CD8-positive, alpha-beta T cell (primary cell): ENCODE measurements at regions of chr21 and their contacts with region 1.

Region 1: DNA sequence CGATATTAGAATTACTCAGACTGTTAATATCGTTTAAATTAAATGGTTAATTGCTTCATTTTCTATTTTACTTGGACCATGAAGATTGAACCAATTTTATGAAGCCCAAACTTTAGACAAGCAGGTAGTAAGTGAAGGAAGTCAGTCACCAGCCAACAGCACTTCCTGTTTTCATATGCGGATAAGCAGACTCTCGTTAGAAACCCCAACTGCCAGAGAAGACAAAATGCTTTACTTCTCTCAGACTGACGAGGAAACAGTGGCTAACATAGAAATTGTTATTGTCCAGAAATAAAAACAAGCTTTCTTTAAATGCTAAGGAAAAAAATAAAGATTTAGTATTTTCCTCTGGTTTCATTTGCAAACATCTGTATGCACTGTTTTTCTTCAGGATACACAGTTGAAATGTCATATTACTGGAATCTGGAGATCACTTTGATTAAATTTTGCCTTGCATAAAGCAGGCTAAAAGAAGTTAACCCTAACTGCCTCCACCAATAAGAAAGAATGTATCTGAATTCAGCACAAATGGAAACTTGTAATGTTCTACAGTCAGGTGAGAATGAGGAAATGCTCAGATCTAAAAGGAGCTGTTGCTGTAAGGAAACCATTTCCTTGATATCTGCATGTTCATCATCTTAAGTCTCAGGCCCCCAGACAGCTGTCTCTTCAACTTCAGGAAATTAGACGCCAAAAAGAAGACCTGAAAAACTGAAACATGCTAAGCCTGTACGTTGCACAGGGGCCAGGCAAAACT is 129.8 kb upstream of the SAMSN1 start:
- DNase-seq: peak in 7 of 9 experiments; percentile 4 to 77 (median 26)
- ATAC-seq: peak; percentile 90
- H3K4me3 ChIP-seq: no peak overlapping the region
- H3K4me3 Mint-ChIP-seq: peak overlapping the region; percentile 45
- H3K27ac ChIP-seq: peak overlapping the region; percentile 45 to 85
- H3K27ac Mint-ChIP-seq: peak overlapping the region; percentile 93
- H3K4me1 ChIP-seq: peaks cover 31% of the 10 kb centered on the region
- H3K4me1 Mint-ChIP-seq: peaks cover 52% of the 10 kb centered on the region
- H3K27me3 ChIP-seq: no peaks in the 10 kb centered on the region
- H3K27me3 Mint-ChIP-seq: no peaks in the 10 kb centered on the region
- CTCF ChIP-seq: no peak

Region 2: GRCh38 chr21:14382835-14383594 is 292.9 kb before region 1 on chr21 and contains the start of gene HSPA13:
- CTCF ChIA-PET with region 1: no interaction called
- POLR2A ChIA-PET with region 1: interaction called, 3 read pairs
- intact Hi-C with region 1: loop called (anchors 2 to 5 kb)
- DNase-seq: peak; percentile 97 to 100 (median 99)
- ATAC-seq: peak; percentile 91
- H3K4me3 ChIP-seq: peak within 1 kb of the TSS; percentile 65 to 92
- H3K4me3 Mint-ChIP-seq: peak within 1 kb of the TSS; percentile 100
- H3K27ac ChIP-seq: peak within 1 kb of the TSS; percentile 94 to 96
- H3K27ac Mint-ChIP-seq: peak within 1 kb of the TSS; percentile 100
- H3K4me1 ChIP-seq: peaks cover 24% of the 10 kb centered on the region
- H3K4me1 Mint-ChIP-seq: peaks cover 40% of the 10 kb centered on the region
- H3K27me3 ChIP-seq: no peaks in the 10 kb centered on the region
- H3K27me3 Mint-ChIP-seq: no peaks in the 10 kb centered on the region
- CTCF ChIP-seq: no peak
- total RNA-seq, gene HSPA13: 54.3 to 58.1 TPM

Region 3: GRCh38 chr21:14523234-14523633 is 152.7 kb before region 1 on chr21:
- CTCF ChIA-PET with region 1: no interaction called
- POLR2A ChIA-PET with region 1: no interaction called
- intact Hi-C with region 1: loop called in 1 of 2 experiments (anchors 5 kb)
- DNase-seq: peak in 3 of 9 experiments; percentile 12 to 63 (median 56)
- ATAC-seq: peak; percentile 49
- H3K4me3 ChIP-seq: peak overlapping the region in 1 of 2 experiments; percentile 18
- H3K4me3 Mint-ChIP-seq: peak overlapping the region; percentile 67
- H3K27ac ChIP-seq: peak overlapping the region in 1 of 2 experiments; percentile 21
- H3K27ac Mint-ChIP-seq: peak overlapping the region; percentile 4
- H3K4me1 ChIP-seq: peaks cover 10% of the 10 kb centered on the region
- H3K4me1 Mint-ChIP-seq: peaks cover 58% of the 10 kb centered on the region
- H3K27me3 ChIP-seq: no peaks in the 10 kb centered on the region
- H3K27me3 Mint-ChIP-seq: no peaks in the 10 kb centered on the region
- CTCF ChIP-seq: no peak

Region 4: DNA sequence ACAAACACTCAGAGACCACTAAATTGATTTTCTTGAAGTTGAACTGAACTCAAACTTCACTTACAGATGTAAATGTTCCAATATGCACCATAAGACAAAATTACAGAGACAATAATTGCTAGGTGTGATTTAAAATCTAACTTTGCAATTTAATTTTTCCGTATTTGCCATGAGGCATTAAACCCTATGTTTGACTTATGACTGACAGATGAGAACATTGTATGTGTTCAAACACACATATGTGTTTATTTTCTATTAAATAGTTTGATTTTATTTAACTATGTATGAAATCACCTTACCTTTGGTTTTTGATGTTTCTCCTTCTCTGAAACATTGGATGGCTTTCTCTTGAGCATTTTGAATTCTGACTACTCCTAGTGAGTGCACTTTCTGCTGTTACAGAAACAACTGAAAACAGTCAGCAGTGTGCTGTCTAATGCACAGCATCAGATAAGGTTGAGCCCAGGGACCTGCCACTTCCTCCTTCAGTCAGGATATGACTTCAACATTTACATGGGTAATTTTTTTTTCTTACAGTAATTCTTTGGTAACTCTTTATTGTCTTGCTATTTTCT is 130.0 kb before region 1 on chr21 and contains the start of gene SAMSN1:
- CTCF ChIA-PET with region 1: no interaction called
- POLR2A ChIA-PET with region 1: interaction called, 3 read pairs
- intact Hi-C with region 1: loop called in 1 of 2 experiments (anchors 2 kb)
- DNase-seq: peak; percentile 37 to 88 (median 67)
- ATAC-seq: peak; percentile 90
- H3K4me3 ChIP-seq: peak within 1 kb of the TSS; percentile 53 to 81
- H3K4me3 Mint-ChIP-seq: peak within 1 kb of the TSS; percentile 93
- H3K27ac ChIP-seq: peak within 1 kb of the TSS; percentile 65 to 70
- H3K27ac Mint-ChIP-seq: peak within 1 kb of the TSS; percentile 97
- H3K4me1 ChIP-seq: peaks cover 41% of the 10 kb centered on the region
- H3K4me1 Mint-ChIP-seq: peaks cover 60% of the 10 kb centered on the region
- H3K27me3 ChIP-seq: no peaks in the 10 kb centered on the region
- H3K27me3 Mint-ChIP-seq: no peaks in the 10 kb centered on the region
- CTCF ChIP-seq: no peak
- total RNA-seq, gene SAMSN1: 45.8 to 47.0 TPM

Region 5: GRCh38 chr21:14602382-14602958 is 73.5 kb before region 1 on chr21:
- CTCF ChIA-PET with region 1: no interaction called
- POLR2A ChIA-PET with region 1: no interaction called
- intact Hi-C with region 1: loop called in 1 of 2 experiments (anchors 5 kb)
- DNase-seq: peak in 2 of 9 experiments; percentile 19 to 39
- ATAC-seq: no peak
- H3K4me3 ChIP-seq: peak overlapping the region; percentile 30 to 38
- H3K4me3 Mint-ChIP-seq: peak overlapping the region; percentile 70
- H3K27ac ChIP-seq: no peak overlapping the region
- H3K27ac Mint-ChIP-seq: no peak overlapping the region
- H3K4me1 ChIP-seq: peaks cover 9% of the 10 kb centered on the region
- H3K4me1 Mint-ChIP-seq: peaks cover 19% of the 10 kb centered on the region
- H3K27me3 ChIP-seq: no peaks in the 10 kb centered on the region
- H3K27me3 Mint-ChIP-seq: no peaks in the 10 kb centered on the region
- CTCF ChIP-seq: no peak

Region 6: DNA sequence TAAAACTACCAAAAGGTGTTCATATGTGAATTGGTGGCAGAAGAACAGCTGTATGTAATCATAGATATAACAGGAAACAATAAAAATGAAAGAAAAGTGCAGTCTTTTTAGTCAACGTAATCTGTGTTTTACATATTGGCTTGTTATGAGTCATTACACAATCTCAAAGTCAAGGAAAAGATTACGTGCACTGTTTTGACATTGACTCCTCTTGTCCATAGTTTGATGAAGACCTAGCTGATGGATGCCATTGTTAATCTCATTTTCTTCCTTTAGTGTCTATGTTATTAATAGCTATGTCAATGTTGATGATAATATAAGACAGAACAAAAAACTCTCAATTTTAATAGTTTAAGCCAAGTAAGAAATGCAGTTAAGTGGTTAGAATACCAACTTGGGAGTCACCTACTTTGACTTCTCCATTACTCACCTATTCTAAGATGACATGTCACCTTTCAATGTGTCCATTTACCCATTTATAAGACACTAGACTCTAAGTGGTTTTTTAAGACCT is 45.3 kb before region 1 on chr21:
- CTCF ChIA-PET with region 1: no interaction called
- POLR2A ChIA-PET with region 1: no interaction called
- intact Hi-C with region 1: loop called in 1 of 2 experiments (anchors 5 kb)
- DNase-seq: peak in 2 of 9 experiments; percentile 14 to 23
- ATAC-seq: peak; percentile 73
- H3K4me3 ChIP-seq: no peak overlapping the region
- H3K4me3 Mint-ChIP-seq: no peak overlapping the region
- H3K27ac ChIP-seq: no peak overlapping the region
- H3K27ac Mint-ChIP-seq: no peak overlapping the region
- H3K4me1 ChIP-seq: no peaks in the 10 kb centered on the region
- H3K4me1 Mint-ChIP-seq: peaks cover 16% of the 10 kb centered on the region
- H3K27me3 ChIP-seq: no peaks in the 10 kb centered on the region
- H3K27me3 Mint-ChIP-seq: no peaks in the 10 kb centered on the region
- CTCF ChIP-seq: no peak

Region 7: GRCh38 chr21:14657241-14658008 is 18.5 kb before region 1 on chr21:
- CTCF ChIA-PET with region 1: no interaction called
- POLR2A ChIA-PET with region 1: no interaction called
- intact Hi-C with region 1: no loop called
- DNase-seq: no peak
- ATAC-seq: no peak
- H3K4me3 ChIP-seq: no peak overlapping the region
- H3K4me3 Mint-ChIP-seq: no peak overlapping the region
- H3K27ac ChIP-seq: no peak overlapping the region
- H3K27ac Mint-ChIP-seq: no peak overlapping the region
- H3K4me1 ChIP-seq: no peaks in the 10 kb centered on the region
- H3K4me1 Mint-ChIP-seq: no peaks in the 10 kb centered on the region
- H3K27me3 ChIP-seq: no peaks in the 10 kb centered on the region
- H3K27me3 Mint-ChIP-seq: no peaks in the 10 kb centered on the region
- CTCF ChIP-seq: no peak

Region 8: DNA sequence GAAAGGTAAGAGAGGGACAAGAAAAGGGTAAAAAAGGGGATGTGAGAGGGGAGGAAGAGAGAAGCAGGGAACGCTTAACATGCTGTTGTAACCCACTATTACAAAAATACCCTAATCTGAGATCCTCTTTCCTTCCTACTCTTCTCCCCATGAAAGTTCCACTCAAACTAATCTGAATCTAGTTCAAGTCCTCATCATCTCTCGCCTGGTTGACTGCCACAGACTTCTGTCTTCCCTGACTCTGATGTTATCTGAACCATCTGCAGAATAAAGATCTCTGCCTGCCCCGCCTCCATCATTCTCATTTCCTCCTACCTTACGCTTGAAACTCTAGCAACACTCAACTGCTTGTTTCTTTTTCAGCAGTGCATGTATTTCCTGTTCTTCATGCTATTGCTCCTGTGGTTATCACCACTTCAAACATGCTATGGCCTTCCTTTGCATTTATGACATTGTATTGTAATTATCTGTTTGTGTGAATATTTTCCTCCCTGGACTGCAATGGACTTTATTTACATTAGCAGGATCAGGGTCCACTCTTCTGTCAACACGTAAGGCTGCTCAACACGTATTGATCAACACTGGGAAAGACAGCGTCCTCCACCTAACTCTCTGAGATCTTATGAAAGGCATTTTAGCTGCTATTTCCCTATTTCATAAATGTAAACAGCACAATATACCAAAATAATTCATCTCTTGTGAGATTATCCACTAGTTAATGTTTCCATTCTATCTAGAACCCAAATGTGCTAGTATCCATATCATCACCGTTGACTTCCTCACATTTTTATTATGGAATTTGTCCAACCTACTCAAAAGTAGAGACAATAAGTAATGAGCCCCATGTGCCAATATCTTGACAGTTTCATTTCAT is 838.4 kb after region 1 on chr21:
- CTCF ChIA-PET with region 1: no interaction called
- POLR2A ChIA-PET with region 1: no interaction called
- intact Hi-C with region 1: loop called in 1 of 2 experiments (anchors 10 kb)
- DNase-seq: peak; percentile 11 to 84 (median 65)
- ATAC-seq: peak; percentile 99
- H3K4me3 ChIP-seq: peak overlapping the region in 1 of 2 experiments; percentile 0
- H3K4me3 Mint-ChIP-seq: peak overlapping the region; percentile 39
- H3K27ac ChIP-seq: peak overlapping the region; percentile 33 to 78
- H3K27ac Mint-ChIP-seq: peak overlapping the region; percentile 85
- H3K4me1 ChIP-seq: peaks cover 25% of the 10 kb centered on the region
- H3K4me1 Mint-ChIP-seq: peaks cover 25% of the 10 kb centered on the region
- H3K27me3 ChIP-seq: no peaks in the 10 kb centered on the region
- H3K27me3 Mint-ChIP-seq: no peaks in the 10 kb centered on the region
- CTCF ChIP-seq: no peak